ENCODE measurements at regions of chr11 and their contacts with region 1.

Region 1: DNA sequence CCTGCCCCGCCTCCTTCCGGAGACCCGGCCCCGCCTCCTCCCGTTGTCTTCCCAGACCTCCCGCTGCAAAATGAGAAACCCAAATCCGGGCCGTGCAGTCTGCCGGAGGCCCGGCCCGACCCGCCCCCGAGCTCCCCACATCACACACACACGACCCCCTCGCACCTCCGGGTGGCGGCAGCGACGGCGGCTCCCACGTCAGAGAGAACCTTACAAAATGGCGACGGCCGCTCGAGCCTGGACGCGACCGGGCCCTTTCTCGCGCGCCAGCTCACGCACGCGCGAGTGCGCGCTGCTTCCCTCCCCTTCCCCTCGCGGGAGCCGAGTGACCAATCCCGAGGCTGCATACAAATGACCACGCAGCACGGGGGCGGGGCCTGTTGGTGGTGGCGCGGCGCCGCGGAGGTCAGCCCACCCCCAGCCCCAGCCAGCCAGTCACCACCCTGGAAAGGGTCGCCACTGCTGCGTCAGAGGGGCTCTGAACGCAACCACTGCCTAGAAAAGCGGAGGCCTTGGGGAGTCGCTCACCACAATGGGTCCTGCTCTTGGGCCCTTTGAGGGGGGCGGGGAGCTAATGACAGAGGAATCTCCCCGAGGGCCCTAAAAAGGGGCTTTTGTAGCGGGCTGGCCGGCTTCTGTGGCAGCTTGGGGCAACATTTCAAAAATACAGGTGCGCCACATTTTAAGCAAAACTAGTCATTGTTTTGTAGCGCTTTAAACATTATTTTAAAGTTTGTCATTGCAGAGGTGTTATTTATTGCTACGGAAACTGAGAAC is at the start of gene RBM4B:
- DNase-seq: peak; percentile 93
- ATAC-seq: peak; percentile 96
- H3K4me3 ChIP-seq: peak within 1 kb of the TSS; percentile 73
- H3K27ac ChIP-seq: peak within 1 kb of the TSS; percentile 97
- H3K4me1 ChIP-seq: peaks cover 5% of the 10 kb centered on the region
- H3K27me3 ChIP-seq: no peaks in the 10 kb centered on the region
- CTCF ChIP-seq: no peak
- POLR2A ChIP-seq: peak; percentile 97
- RAD21 ChIP-seq: 0 out of 2 replicates have a peak, but pooled peaks have one; percentile 1
- total RNA-seq, gene RBM4B: 23.1 and 25.6 TPM in 2 replicates

Region 2: DNA sequence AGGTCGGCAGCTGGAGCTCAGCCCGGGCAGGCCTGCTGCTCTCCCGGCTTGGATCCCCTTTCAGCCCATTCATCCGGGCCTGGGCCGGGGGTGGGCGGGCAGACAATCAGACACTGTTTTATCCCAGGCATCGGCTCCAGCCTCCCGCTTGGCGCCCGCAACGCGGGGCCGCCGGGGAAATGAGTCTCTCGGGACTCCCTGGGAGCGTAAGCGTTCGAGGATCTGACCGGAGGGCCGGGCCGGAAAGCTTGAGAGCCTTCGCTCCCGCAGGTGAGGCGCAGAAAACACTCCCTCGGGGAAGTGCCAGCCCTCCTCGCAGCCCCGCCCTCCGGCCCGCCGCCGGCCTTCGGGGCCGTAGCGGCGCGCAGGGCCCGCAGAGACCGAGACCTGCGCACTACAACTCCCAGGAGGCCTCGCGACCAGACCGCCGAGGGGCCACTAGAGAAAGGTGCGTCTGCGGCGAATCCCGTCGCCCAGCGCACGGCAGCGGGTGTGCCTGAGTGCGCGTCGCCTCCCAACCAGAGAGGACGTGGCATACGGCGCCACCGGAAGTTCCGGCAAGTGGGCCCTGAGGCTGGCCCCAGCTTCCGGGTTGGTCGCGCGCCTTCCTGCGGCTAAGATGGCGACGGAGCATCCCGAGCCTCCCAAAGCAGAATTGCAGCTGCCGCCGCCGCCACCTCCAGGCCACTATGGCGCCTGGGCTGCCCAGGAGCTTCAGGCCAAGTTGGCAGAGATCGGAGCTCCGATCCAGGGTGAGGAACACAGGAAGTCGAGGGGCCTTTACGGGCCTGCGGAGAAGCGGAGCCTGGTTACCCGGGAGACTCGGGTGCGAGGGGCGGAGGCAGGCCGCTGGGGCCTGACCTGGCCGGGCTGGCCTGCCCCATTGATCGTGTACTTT is 625.8 kb before region 1 on chr11 and contains the start of gene SF3B2:
- CTCF ChIA-PET with region 1: no interaction called
- POLR2A ChIA-PET with region 1: no interaction called
- dilution Hi-C with region 1: no loop called
- in situ Hi-C with region 1: no loop called
- intact Hi-C with region 1: no loop called
- DNase-seq: peak; percentile 98
- ATAC-seq: peak; percentile 98
- H3K4me3 ChIP-seq: peak within 1 kb of the TSS; percentile 86
- H3K27ac ChIP-seq: peak within 1 kb of the TSS; percentile 87
- H3K4me1 ChIP-seq: peaks cover 8% of the 10 kb centered on the region
- H3K27me3 ChIP-seq: peaks cover 15% of the 10 kb centered on the region; the same call in 1 of the 2 replicates
- CTCF ChIP-seq: no peak
- POLR2A ChIP-seq: peak; percentile 84
- RAD21 ChIP-seq: no peak
- total RNA-seq, gene SF3B2: 120 and 164 TPM in 2 replicates

Region 3: DNA sequence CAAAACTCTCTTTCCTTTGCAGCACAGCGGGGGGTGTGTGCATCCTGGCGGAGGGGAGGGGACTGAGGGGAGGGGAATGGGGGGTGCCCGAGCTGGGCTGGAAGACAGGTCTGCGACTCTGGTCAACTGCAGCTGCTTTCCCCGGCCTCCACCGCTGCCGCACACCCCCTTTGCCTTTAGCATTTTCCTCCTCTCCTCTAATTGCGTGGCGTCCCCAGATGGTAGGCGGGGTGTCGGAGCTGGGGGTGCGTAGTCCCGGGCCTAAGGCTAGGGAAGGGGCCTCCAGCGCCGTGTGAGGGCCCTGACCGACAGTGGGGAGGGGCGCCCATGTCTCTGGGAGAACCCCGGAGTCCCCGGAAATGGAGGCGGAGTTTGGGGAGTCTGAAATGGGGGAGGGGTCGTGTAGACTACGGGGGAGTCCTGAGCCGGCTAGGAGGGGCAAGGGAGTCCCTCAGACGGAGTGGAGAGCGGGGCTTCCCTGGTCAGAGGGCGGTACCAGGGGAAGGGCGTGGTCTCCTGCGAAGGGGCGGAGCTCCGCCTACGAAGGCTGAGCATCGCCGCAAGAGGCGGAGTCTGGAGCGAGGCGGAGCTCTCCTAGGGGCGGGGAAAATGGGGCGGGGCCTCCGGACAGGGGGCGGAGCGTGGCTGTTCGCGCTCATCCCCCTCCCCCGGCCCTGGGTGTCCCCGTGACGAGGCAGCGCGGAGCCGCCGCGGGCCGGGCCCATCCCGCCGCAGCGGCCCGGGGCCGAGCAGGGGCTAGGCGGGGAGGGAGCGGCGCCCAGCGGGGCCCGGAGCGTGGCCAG is 211.4 kb before region 1 on chr11 and contains the start of gene PELI3:
- CTCF ChIA-PET with region 1: no interaction called
- POLR2A ChIA-PET with region 1: no interaction called
- dilution Hi-C with region 1: no loop called
- in situ Hi-C with region 1: no loop called
- intact Hi-C with region 1: loop called (anchors 1 kb)
- DNase-seq: peak; percentile 88
- ATAC-seq: peak; percentile 96
- H3K4me3 ChIP-seq: peak within 1 kb of the TSS; percentile 71
- H3K27ac ChIP-seq: peak within 1 kb of the TSS; percentile 66
- H3K4me1 ChIP-seq: peaks cover 8% of the 10 kb centered on the region; the same call in 1 of the 2 replicates
- H3K27me3 ChIP-seq: no peaks in the 10 kb centered on the region
- CTCF ChIP-seq: no peak
- POLR2A ChIP-seq: peak; percentile 56
- RAD21 ChIP-seq: no peak
- total RNA-seq, gene PELI3: 3.9 and 5.0 TPM in 2 replicates

Region 4: DNA sequence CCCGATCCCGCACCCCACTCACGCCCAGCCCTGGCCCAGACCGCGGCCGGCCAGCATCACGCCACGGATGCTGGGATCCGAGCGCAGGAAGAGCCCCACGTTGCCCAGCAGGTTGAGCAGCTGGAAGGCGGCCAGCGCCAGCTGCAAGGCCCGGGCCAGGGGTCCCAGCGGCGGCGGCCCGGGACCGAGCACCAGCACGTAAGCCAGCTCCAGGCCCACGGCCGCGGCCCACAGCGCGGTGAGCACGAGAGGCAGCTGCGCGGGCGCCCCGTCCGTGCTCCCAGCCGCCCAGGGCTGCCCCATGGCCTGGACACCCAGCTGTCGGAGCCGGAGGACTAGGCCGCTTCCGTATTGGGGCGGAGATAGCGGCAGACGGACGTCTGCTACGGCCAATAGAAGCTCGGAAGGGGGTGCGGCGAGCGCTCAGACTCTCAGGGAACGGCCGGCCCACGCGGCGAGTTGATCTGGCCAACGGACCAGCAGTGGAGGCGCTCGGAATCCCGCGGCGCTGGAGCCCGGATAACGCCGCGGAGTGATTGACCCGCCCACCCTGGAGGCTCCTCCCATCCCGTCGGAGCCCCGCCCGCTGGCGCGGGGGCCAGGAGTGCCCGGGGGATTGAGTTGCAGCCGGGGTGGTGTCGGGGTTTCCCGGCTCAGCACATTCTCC is 132.0 kb before region 1 on chr11 and contains the start of gene ZDHHC24:
- CTCF ChIA-PET with region 1: interaction called, 7 read pairs
- POLR2A ChIA-PET with region 1: no interaction called
- dilution Hi-C with region 1: no loop called
- in situ Hi-C with region 1: no loop called
- intact Hi-C with region 1: loop called (anchors 1 kb)
- DNase-seq: peak; percentile 95
- ATAC-seq: peak; percentile 96
- H3K4me3 ChIP-seq: peak within 1 kb of the TSS; percentile 75
- H3K27ac ChIP-seq: peak within 1 kb of the TSS; percentile 30; the same call in 1 of the 2 replicates
- H3K4me1 ChIP-seq: peaks cover 6% of the 10 kb centered on the region
- H3K27me3 ChIP-seq: peaks cover 23% of the 10 kb centered on the region
- CTCF ChIP-seq: no peak
- POLR2A ChIP-seq: peak; percentile 87
- RAD21 ChIP-seq: no peak
- total RNA-seq, gene ZDHHC24: 3.2 and 3.6 TPM in 2 replicates

Region 5: GRCh38 chr11:66579017-66579606 is 98.7 kb before region 1 on chr11:
- CTCF ChIA-PET with region 1: interaction called, 5 read pairs
- POLR2A ChIA-PET with region 1: no interaction called
- dilution Hi-C with region 1: no loop called
- in situ Hi-C with region 1: no loop called
- intact Hi-C with region 1: loop called (anchors 1 kb)
- DNase-seq: peak; percentile 77
- ATAC-seq: peak; percentile 93
- H3K4me3 ChIP-seq: no peak overlapping the region
- H3K27ac ChIP-seq: no peak overlapping the region
- H3K4me1 ChIP-seq: peaks cover 6% of the 10 kb centered on the region
- H3K27me3 ChIP-seq: no peaks in the 10 kb centered on the region
- CTCF ChIP-seq: peak; percentile 82
- POLR2A ChIP-seq: no peak
- RAD21 ChIP-seq: peak; percentile 85